Transverse colon (tissue), 4 donors: ENCODE measurements at regions of chr19 and their contacts with region 1.

Region 1: GRCh38 chr19:43595999-43596841 is at the starts of genes IRGQ and ZNF576:
- DNase-seq: peak; percentile 100
- H3K4me3 ChIP-seq: peak within 1 kb of the TSS; percentile 50 to 88 (median 73)
- H3K27ac ChIP-seq: peak within 1 kb of the TSS; percentile 86 to 98 (median 96)
- H3K4me1 ChIP-seq: peaks cover 25 to 40% (median 31%) of the 10 kb centered on the region in 4 donors
- H3K27me3 ChIP-seq: no peaks in the 10 kb centered on the region
- CTCF ChIP-seq: peak in 2 of 5 experiments; percentile 12 to 19
- EP300 ChIP-seq: no peak
- POLR2A ChIP-seq: peak; percentile 93
- total RNA-seq, gene IRGQ: 15.7 to 32.5 (median 24.7) TPM
- total RNA-seq, gene ZNF576: 3.7 to 11.9 (median 9.8) TPM

Region 2: DNA sequence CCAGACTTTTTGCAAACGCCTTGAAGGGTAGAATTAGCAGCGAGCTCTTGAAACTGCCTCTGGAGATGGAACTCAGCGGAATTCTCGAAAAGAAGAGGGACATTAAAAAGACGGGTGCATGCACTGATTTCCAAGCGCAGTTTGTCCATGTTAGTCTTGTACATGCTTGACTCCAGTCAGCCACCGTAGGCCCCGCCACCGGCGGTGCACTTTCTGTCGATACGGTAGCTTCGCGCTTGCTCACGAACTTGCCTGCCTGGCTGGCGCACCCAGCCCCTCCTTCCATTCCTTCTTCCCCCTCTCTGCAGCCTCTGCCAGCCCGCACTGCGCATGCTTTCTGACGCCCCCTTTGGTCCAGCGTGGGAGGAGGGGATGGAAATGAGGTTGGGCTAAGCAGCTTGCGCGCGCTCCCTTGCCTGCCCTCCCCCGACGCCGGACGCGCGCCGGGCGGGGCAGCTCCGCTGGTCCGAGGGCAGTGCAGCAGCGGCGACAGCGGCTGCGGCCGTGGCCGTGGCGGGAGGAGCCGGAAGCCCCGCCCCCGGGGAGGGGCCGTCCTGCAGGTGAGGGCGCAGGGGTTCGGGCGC is 63.2 kb before region 1 on chr19 and contains the start of gene ZNF575:
- in situ Hi-C with region 1: no loop called
- intact Hi-C with region 1: loop called (anchors 10 kb)
- DNase-seq: peak; percentile 91
- H3K4me3 ChIP-seq: peak within 1 kb of the TSS; percentile 41 to 62 (median 53)
- H3K27ac ChIP-seq: peak within 1 kb of the TSS; percentile 92 to 98 (median 96)
- H3K4me1 ChIP-seq: peaks cover 9 to 35% (median 16%) of the 10 kb centered on the region in 4 donors
- H3K27me3 ChIP-seq: no peaks in the 10 kb centered on the region
- CTCF ChIP-seq: peak in 1 of 5 experiments; percentile 1
- EP300 ChIP-seq: no peak
- POLR2A ChIP-seq: no peak
- total RNA-seq, gene ZNF575: 0.20 to 1.9 (median 1.8) TPM in 3 of 4 donors, not detected in the other

Region 3: DNA sequence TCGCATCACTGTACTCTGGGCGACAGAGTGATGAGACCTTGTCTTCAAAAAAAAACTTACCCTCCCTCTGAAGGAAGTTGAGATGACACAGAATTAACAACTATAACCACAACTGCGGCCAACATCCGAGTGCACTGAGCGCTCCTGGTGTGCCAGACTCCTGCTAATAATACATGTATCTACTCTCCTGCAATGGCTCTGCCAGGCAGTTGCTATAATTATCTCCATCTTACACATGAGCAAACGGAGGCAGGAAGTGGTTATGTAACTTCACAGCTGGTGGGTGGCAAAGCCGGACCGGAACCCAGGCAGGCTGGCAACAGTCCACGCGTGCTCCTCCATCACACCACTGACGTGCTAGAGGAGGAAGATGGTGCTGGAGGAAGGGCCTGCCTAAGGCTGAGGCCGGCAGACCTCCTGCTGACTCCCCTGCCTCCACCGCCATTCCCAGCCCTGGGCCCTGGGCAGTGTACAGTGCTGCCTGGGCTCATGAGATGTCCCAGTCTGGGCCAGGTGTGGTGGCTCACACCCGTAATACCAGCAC is 33.5 kb before region 1 on chr19:
- in situ Hi-C with region 1: no loop called
- intact Hi-C with region 1: loop called (anchors 1 kb)
- DNase-seq: peak; percentile 73
- H3K4me3 ChIP-seq: no peak overlapping the region
- H3K27ac ChIP-seq: peak overlapping the region; percentile 59 to 68 (median 66)
- H3K4me1 ChIP-seq: peaks cover 0 to 13% (median 7%) of the 10 kb centered on the region in 4 donors
- H3K27me3 ChIP-seq: no peaks in the 10 kb centered on the region
- CTCF ChIP-seq: no peak
- EP300 ChIP-seq: no peak
- POLR2A ChIP-seq: no peak